ENCODE measurements at regions of chr19 and their contacts with region 1.

Region 1: DNA sequence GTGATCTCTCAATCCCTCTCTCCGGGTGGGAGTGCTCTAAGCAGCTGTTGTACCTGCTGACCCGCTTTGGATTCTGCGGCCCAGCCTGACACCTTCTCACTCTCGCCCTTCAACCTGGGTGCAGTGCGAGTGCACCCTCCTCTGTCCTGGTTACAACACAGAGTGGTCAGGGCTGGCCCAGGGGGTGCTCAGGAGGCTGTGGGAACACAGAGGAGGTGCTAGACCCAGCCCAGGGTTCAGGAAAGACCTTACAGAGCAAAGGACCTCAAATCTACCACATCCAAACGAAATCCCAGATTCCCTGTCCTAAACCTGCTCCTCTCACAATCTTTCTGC is 23.7 kb downstream of the ZNF175 start:
- DNase-seq: no peak
- H3K4me3 ChIP-seq: peak overlapping the region; percentile 75
- H3K27ac ChIP-seq: no peak overlapping the region
- H3K4me1 ChIP-seq: no peaks in the 10 kb centered on the region
- H3K27me3 ChIP-seq: no peaks in the 10 kb centered on the region
- CTCF ChIP-seq: no peak

Region 2: GRCh38 chr19:51108066-51108804 is 486.5 kb before region 1 on chr19 and contains the start of gene CTU1:
- intact Hi-C with region 1: loop called (anchors 5 kb)
- DNase-seq: peak; percentile 99
- H3K4me3 ChIP-seq: peak within 1 kb of the TSS; percentile 64
- H3K27ac ChIP-seq: no peak within 1 kb of the TSS
- H3K4me1 ChIP-seq: peaks cover 6% of the 10 kb centered on the region
- H3K27me3 ChIP-seq: no peaks in the 10 kb centered on the region
- CTCF ChIP-seq: no peak
- total RNA-seq, gene CTU1: 6.1 to 11.8 TPM

Measured in colonic mucosa (tissue), 4 donors.